PC-3 (cell line): ENCODE measurements at regions of chr1 and their contacts with region 1.

Region 1: DNA sequence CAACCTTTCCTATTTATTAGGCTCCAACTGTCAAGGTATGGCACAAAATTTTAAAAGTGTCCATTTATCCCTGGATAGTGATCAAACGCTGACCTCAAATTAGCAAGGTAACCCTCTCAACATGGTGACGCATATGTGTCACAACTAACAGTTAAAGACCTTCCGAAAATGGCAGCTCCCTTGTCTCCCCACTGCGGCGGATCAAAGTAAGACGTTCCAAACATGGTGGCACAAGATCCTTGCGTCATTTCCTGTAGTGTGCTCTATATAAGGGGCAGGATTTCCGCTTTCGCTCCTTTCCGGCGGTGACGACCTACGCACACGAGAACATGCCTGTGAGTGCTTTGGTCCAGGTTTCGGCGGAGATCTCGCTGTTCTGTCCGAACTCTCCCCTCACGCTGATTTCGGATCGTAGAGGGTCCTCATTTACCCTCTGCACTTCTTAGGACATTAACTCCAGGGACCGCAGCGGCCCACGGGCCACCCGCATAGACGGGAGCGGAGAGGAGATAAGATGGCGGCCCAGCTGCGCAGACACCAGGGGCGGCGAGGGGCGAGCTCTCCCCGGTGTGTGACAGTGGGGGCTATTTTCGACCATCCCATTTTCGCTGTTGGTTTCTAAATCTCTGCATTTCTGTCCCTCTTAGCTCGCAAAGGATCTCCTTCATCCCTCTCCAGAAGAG is at the start of gene RPS27:
- DNase-seq: peak; percentile 99
- ATAC-seq: peak; percentile 36
- H3K4me3 ChIP-seq: peak within 1 kb of the TSS; percentile 94
- H3K27ac ChIP-seq: peak within 1 kb of the TSS; percentile 69
- H3K4me1 ChIP-seq: peaks cover 19% of the 10 kb centered on the region
- H3K27me3 ChIP-seq: no peaks in the 10 kb centered on the region
- CTCF ChIP-seq: no peak
- total RNA-seq, gene RPS27: 1,964 and 2,544 TPM in 2 replicates

Region 2: DNA sequence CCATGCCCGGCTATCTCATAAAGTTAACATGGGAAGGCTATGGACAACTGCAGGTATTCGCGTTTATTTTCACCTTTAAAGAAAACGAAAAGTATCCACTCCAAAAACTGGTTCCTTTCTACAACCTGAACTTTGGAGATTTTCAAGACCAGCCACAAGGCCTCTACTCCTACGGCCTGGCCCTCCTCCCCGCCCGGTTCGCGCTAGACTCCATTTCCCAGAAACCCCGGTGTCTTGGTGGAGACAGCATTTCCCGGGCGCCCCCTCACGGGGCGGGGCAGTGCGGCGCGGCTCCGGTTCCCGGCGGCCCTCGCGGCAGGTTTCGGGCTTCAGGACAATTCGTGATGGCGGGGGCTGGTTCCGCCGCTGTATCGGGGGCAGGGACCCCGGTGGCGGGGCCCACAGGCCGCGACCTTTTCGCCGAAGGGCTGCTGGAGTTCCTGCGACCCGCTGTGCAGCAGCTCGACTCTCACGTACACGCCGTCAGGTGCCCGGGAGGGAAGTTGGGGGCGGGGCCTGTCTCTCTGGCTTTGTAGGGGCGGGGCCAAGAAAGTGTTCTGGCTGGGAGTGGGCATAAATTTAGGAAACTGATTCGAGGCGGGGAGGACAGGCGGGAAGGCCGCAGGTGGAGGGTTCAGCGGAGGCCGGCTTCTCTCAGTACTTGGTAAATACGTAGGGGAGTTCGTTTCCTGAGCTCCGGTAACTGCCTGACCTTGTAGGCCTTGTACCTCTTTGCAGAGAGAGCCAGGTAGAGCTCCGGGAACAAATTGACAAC is 332.0 kb before region 1 on chr1 and contains the start of gene SNAPIN:
- CTCF ChIA-PET with region 1: interaction called, 13 read pairs
- POLR2A ChIA-PET with region 1: interaction called, 3 read pairs
- intact Hi-C with region 1: no loop called
- DNase-seq: peak; percentile 92
- ATAC-seq: peak; percentile 93
- H3K4me3 ChIP-seq: peak within 1 kb of the TSS; percentile 89
- H3K27ac ChIP-seq: peak within 1 kb of the TSS; percentile 62
- H3K4me1 ChIP-seq: peaks cover 14% of the 10 kb centered on the region; the same call in 1 of the 2 replicates
- H3K27me3 ChIP-seq: no peaks in the 10 kb centered on the region
- CTCF ChIP-seq: no peak; the same call in 1 of the 2 replicates
- total RNA-seq, gene SNAPIN: 46.4 and 82.0 TPM in 2 replicates

Region 3: GRCh38 chr1:153796791-153797659 is 193.6 kb before region 1 on chr1:
- CTCF ChIA-PET with region 1: interaction called, 3 read pairs
- POLR2A ChIA-PET with region 1: no interaction called
- intact Hi-C with region 1: loop called (anchors 1 kb)
- DNase-seq: peak; percentile 92
- ATAC-seq: peak; percentile 84
- H3K4me3 ChIP-seq: no peak overlapping the region
- H3K27ac ChIP-seq: no peak overlapping the region
- H3K4me1 ChIP-seq: no peaks in the 10 kb centered on the region
- H3K27me3 ChIP-seq: no peaks in the 10 kb centered on the region
- CTCF ChIP-seq: peak; percentile 88

Region 4: DNA sequence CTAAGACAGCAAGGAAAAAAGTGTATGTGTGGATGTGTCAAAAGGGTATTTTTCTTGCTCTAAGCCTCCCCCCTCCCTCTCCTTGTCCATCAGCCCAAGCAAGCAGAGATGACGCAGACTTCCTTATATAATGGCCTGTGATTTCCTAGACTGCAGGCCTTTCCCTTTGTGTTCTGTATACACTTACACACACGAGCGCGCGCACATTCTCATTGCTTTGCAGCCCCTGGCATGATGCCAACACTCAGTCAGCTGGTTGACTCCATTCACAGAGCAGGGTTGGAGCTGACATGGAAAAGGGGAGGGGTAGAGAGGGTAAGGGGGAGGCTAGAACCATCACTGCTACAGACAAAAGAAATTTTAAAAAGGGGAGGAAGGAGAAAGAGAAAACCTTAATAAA is 109.6 kb before region 1 on chr1:
- CTCF ChIA-PET with region 1: no interaction called
- POLR2A ChIA-PET with region 1: interaction called, 10 read pairs
- intact Hi-C with region 1: no loop called
- DNase-seq: peak; percentile 69
- ATAC-seq: peak; percentile 92
- H3K4me3 ChIP-seq: no peak overlapping the region
- H3K27ac ChIP-seq: no peak overlapping the region
- H3K4me1 ChIP-seq: no peaks in the 10 kb centered on the region
- H3K27me3 ChIP-seq: no peaks in the 10 kb centered on the region
- CTCF ChIP-seq: no peak

Region 5: DNA sequence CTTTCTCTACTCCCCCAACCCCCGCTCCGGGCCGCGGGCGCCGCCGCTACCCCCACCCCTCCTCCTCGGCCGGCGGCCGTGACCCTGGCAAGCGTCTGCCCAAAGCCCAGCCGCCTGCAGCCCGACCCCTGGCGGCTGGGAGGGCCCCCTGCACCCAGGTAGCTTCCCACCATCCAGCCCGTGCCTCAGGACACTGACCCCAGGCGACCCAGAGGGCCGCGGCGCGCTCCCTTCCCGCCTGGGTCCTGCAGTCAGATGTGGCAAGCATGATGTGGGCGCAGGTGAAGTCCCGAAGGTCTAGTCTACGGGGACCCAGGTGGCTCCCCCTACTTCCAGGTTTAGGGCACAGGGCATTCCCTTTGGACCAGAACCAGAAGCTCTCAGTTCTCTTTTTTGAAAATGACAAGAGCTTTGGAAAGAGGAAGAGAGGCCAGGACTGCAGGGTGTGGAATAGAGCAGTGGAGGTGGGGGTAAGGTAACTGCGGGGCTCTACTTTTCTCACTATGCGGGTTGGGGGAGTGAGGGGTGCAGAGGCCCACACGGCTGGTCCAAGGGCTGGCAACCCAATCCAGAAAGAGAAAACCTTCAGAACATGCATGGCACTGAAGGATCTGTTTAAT is 43.9 kb before region 1 on chr1 and contains the start of gene DENND4B:
- CTCF ChIA-PET with region 1: interaction called, 19 read pairs
- POLR2A ChIA-PET with region 1: no interaction called
- intact Hi-C with region 1: no loop called
- DNase-seq: peak; percentile 86
- ATAC-seq: peak; percentile 88
- H3K4me3 ChIP-seq: peak within 1 kb of the TSS; percentile 81
- H3K27ac ChIP-seq: peak within 1 kb of the TSS; percentile 43
- H3K4me1 ChIP-seq: peaks cover 13% of the 10 kb centered on the region
- H3K27me3 ChIP-seq: no peaks in the 10 kb centered on the region
- CTCF ChIP-seq: peak; percentile 90
- total RNA-seq, gene DENND4B: 27.3 and 38.0 TPM in 2 replicates

Region 6: GRCh38 chr1:153977250-153978240 is 13.1 kb before region 1 on chr1 and contains the start of gene JTB:
- CTCF ChIA-PET with region 1: interaction called, 8 read pairs
- POLR2A ChIA-PET with region 1: interaction called, 8 read pairs
- intact Hi-C with region 1: loop called (anchors 1 kb)
- DNase-seq: peak; percentile 89
- ATAC-seq: peak; percentile 91
- H3K4me3 ChIP-seq: peak within 1 kb of the TSS; percentile 79
- H3K27ac ChIP-seq: peak within 1 kb of the TSS; percentile 8
- H3K4me1 ChIP-seq: peaks cover 18% of the 10 kb centered on the region
- H3K27me3 ChIP-seq: no peaks in the 10 kb centered on the region
- CTCF ChIP-seq: no peak
- total RNA-seq, gene JTB: 377 and 388 TPM in 2 replicates